WTC11 (cell line): ENCODE measurements at regions of chr2 and their contacts with region 1.

Region 1: GRCh38 chr2:182763311-182763912 is 47.4 kb downstream of the DNAJC10 start:
- DNase-seq: no peak
- ATAC-seq: peak; percentile 76
- H3K4me3 Mint-ChIP-seq: no peak overlapping the region
- H3K27ac Mint-ChIP-seq: no peak overlapping the region
- H3K4me1 Mint-ChIP-seq: peaks cover 2% of the 10 kb centered on the region
- H3K27me3 Mint-ChIP-seq: no peaks in the 10 kb centered on the region
- CTCF ChIP-seq: peak; percentile 51; the same call in 1 of the 2 replicates

Region 2: DNA sequence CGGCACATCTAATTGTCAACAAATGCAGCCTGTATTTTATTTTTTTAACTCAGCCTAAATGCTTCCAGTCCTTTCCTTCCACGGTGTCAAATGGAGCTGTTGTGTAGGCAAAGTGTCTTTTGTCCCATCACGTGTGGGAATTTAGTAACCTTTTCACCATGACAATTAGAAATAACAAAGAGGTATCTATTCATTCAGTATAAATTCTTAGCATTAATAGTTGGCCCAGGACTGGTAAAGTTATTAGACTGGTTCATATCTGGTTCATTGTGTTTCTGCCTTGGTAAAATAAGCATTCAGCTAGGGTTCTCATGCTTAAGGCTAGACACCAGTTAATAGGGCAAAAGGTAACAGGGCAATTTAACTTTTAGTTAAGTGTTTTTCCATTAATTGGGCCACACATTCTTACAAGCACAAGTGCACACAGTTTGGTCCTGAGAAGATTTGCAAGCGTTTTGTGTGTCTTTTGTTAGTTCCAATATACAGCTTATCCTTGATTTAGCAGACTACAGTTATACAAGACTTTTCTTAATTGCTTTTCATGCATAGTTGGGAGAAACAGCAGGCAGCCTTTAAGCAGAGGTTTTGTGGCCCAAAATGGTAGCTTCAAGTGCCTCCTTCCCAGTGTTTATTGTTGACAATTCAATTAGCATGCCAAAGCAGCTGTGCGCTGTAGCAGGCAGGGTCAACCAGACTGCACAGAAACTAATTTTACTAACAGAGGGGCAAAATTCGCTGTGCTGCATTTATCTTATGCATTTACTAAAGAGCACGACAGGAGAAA is 55.3 kb after region 1 on chr2:
- CTCF ChIA-PET with region 1: interaction called, 15 read pairs
- POLR2A ChIA-PET with region 1: no interaction called
- DNase-seq: peak; percentile 20
- ATAC-seq: peak; percentile 91
- H3K4me3 Mint-ChIP-seq: peak overlapping the region; percentile 31
- H3K27ac Mint-ChIP-seq: peak overlapping the region; percentile 82
- H3K4me1 Mint-ChIP-seq: peaks cover 33% of the 10 kb centered on the region
- H3K27me3 Mint-ChIP-seq: peaks cover 11% of the 10 kb centered on the region
- CTCF ChIP-seq: no peak

Region 3: GRCh38 chr2:182980115-182980514 is 216.7 kb after region 1 on chr2:
- CTCF ChIA-PET with region 1: interaction called, 29 read pairs
- POLR2A ChIA-PET with region 1: no interaction called
- DNase-seq: no peak
- ATAC-seq: peak; percentile 43; the same call in 1 of the 2 replicates
- H3K4me3 Mint-ChIP-seq: no peak overlapping the region
- H3K27ac Mint-ChIP-seq: no peak overlapping the region
- H3K4me1 Mint-ChIP-seq: no peaks in the 10 kb centered on the region
- H3K27me3 Mint-ChIP-seq: no peaks in the 10 kb centered on the region
- CTCF ChIP-seq: no peak; the same call in 1 of the 2 replicates